ENCODE measurements at regions of chr19 and their contacts with region 1.

Region 1: DNA sequence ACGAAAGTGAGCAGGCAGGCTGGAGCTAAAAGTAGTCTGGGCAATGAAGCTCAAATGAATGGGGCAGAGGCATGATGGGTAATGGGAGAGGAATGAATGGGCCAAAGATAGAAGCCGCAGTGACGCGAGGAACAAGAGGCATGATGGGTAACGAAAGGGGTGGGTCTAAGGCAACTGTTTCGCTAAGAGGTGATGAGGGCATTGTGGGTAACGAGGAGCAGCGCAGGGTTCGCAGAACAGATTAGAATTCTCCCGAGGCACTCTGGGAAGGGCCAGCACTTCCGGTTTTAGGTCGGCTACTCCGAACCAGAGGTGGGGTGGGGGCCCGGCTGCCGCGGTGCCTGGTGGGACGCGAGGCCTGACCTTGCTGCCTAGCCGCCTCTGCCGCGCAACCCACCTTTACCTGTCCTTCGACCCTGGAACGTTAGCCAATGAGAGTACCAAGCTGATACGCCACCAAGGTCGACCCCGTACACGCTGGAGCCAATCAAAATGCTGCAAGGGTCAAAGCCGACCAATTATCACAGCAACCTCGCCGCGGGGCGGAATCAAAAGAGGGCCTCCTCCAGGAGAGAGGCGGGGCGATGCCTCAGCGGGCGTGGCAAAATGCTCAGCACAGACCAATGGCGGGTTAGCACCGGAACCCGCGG is 563 bp upstream of the TOMM40 start:
- DNase-seq: peak; percentile 100
- ATAC-seq: peak; percentile 78
- H3K4me3 ChIP-seq: peak overlapping the region; percentile 65 to 90 (median 73)
- H3K4me3 Mint-ChIP-seq: peak overlapping the region; percentile 92
- H3K27ac ChIP-seq: peak overlapping the region; percentile 87 to 98
- H3K27ac Mint-ChIP-seq: peak overlapping the region; percentile 94
- H3K4me1 ChIP-seq: peaks cover 16 to 21% of the 10 kb centered on the region in 2 donors
- H3K4me1 Mint-ChIP-seq: peaks cover 29% of the 10 kb centered on the region
- H3K27me3 ChIP-seq: no peaks in the 10 kb centered on the region
- H3K27me3 Mint-ChIP-seq: no peaks in the 10 kb centered on the region
- CTCF ChIP-seq: no peak

Region 2: DNA sequence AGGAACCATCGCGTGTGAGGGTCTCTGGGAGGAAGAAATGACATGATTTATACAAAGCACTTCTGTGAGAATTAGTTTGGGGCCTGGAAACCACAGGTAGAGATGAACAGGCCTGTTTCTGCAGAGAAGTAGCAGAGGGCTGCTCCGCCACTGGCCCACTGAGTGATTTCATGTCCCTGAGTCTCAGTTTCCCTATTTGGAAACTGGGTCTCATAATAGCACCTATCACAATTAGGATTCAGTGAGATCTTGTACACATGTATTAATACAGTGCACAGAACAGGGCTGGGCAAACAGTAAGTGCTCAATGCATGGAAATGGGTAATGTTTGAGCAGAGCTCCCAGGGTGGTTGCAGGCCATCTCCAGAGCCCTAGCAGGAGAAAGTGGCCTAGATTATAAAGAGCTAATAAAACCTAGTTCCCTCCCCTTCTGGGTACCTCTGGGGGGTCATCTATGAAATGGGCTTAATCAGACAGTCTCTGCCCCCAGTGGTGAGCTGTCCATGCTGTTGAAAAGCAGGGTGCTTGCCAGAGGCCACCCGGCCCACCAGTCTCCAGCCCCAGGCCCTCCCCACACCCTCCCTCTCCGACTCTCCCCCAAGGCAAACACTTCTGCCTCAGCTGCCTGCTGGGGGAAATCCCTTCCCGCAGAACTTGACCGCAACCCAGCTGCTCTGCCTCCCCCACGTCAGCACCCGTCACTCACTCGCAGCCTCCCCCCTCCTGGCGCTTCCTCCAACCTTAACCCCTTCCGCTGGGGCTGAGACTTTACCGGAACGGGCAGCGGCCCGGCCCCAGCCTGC is 137.5 kb before region 1 on chr19:
- CTCF ChIA-PET with region 1: no interaction called
- POLR2A ChIA-PET with region 1: interaction called, 6 read pairs
- intact Hi-C with region 1: loop called (anchors 1 kb)
- DNase-seq: peak; percentile 97
- ATAC-seq: peak; percentile 69
- H3K4me3 ChIP-seq: peak overlapping the region; percentile 44 to 94 (median 69)
- H3K4me3 Mint-ChIP-seq: peak overlapping the region; percentile 97
- H3K27ac ChIP-seq: peak overlapping the region; percentile 92
- H3K27ac Mint-ChIP-seq: peak overlapping the region; percentile 98
- H3K4me1 ChIP-seq: peaks cover 55 to 69% of the 10 kb centered on the region in 2 donors
- H3K4me1 Mint-ChIP-seq: peaks cover 59% of the 10 kb centered on the region
- H3K27me3 ChIP-seq: no peaks in the 10 kb centered on the region
- H3K27me3 Mint-ChIP-seq: no peaks in the 10 kb centered on the region
- CTCF ChIP-seq: no peak

Region 3: DNA sequence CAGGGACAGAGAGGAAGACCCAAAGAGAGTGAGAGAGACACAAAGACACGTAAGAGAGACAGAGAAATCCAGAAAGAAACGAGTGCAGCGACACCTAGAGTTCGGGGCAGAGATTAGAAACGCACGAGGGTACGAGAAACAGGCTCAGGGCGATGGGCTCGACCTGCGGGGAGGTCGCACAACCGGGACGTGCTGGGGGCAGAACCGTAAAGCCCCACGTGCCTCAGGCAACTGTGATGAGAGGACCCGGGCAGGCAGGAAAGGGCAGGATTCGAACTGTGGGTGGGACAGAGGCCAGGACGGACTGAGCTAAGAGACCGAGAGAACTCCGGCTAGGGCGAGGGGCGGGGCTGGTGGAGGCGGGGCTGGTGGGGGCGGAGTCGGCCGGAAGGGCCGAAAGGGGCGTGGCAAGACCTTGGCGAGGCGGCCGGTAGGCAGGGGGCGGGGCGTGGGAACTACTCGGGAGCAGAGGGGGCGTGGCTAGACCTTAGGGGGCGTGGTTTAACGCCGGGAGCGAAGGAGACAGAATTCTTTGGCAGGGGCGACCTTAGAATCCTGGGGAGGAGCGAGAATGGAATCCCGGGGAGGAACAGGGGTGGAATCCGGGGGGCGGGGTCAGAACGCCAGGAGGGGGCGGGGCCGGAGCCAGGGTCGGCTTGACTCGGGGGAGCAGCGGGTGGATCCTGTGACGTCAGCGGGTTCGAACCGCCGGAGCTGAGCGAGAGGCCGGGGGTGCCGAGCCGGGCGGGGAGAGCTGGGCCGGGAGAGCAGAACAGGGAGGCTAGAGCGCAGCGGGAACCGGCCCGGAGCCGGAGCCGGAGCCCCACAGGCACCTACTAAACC is 44.7 kb before region 1 on chr19 and contains the start of gene NECTIN2:
- CTCF ChIA-PET with region 1: no interaction called
- POLR2A ChIA-PET with region 1: no interaction called
- intact Hi-C with region 1: no loop called
- DNase-seq: peak; percentile 79
- ATAC-seq: peak; percentile 64
- H3K4me3 ChIP-seq: peak within 1 kb of the TSS; percentile 19 to 64 (median 47)
- H3K4me3 Mint-ChIP-seq: peak within 1 kb of the TSS; percentile 83
- H3K27ac ChIP-seq: no peak within 1 kb of the TSS
- H3K27ac Mint-ChIP-seq: peak within 1 kb of the TSS; percentile 20
- H3K4me1 ChIP-seq: peaks cover 35% of the 10 kb centered on the region in 2 donors
- H3K4me1 Mint-ChIP-seq: peaks cover 22% of the 10 kb centered on the region
- H3K27me3 ChIP-seq: peaks cover 0 to 44% (median 19%) of the 10 kb centered on the region in 4 experiments
- H3K27me3 Mint-ChIP-seq: peaks cover 38% of the 10 kb centered on the region
- CTCF ChIP-seq: no peak
- total RNA-seq, gene NECTIN2: 0.32 TPM in 1 of 2 replicates, not detected in the other

Region 4: GRCh38 chr19:44912854-44913253 is 22.4 kb after region 1 on chr19:
- CTCF ChIA-PET with region 1: interaction called, 3 read pairs
- POLR2A ChIA-PET with region 1: no interaction called
- intact Hi-C with region 1: loop called (anchors 1 kb)
- DNase-seq: no peak
- ATAC-seq: no peak
- H3K4me3 ChIP-seq: no peak overlapping the region
- H3K4me3 Mint-ChIP-seq: no peak overlapping the region
- H3K27ac ChIP-seq: no peak overlapping the region
- H3K27ac Mint-ChIP-seq: no peak overlapping the region
- H3K4me1 ChIP-seq: peaks cover 7 to 13% of the 10 kb centered on the region in 2 donors
- H3K4me1 Mint-ChIP-seq: peaks cover 9% of the 10 kb centered on the region
- H3K27me3 ChIP-seq: peaks cover 0 to 21% (median 2%) of the 10 kb centered on the region in 4 experiments
- H3K27me3 Mint-ChIP-seq: peaks cover 26% of the 10 kb centered on the region
- CTCF ChIP-seq: no peak

Region 5: DNA sequence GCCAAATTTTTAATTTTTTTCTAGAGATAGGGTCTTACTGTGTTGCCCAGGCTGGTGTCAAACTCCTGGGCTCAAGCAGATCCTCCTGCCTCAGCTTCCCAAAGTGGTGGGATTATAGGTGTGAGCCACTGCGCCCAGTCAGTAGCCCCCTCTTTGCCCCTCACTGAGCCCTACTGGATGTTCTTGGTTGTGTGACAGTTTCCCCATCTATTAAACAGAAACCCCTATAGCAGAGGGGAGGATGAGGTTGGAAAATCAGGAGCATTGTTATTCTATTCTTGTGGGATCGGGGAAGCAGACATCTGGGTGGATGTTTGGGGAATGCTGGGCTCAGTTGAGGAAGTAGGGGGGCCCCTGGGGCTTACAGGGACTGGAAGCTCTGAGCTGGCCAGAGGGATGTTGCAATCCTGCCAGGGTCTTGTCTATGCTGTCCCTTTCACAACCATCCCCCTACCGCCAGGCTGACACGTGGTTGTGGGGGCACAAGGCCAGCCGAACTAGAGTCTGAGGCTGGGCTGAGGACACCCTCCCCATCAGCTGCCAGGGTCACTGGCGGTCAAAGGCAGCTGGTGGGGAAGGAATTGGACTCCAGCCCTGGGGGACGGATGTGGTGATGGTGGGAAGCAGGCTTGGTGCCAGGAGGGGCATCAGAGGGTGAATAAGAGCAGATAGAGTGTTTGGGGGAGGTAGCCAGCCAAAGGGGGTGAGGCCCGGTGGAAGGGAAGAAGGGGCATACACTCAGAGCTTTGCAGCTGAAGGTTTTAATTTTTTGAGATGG is 34.8 kb after region 1 on chr19:
- CTCF ChIA-PET with region 1: no interaction called
- POLR2A ChIA-PET with region 1: no interaction called
- intact Hi-C with region 1: no loop called
- DNase-seq: no peak
- ATAC-seq: no peak
- H3K4me3 ChIP-seq: no peak overlapping the region
- H3K4me3 Mint-ChIP-seq: no peak overlapping the region
- H3K27ac ChIP-seq: no peak overlapping the region
- H3K27ac Mint-ChIP-seq: no peak overlapping the region
- H3K4me1 ChIP-seq: peaks cover 4 to 8% of the 10 kb centered on the region in 2 donors
- H3K4me1 Mint-ChIP-seq: peaks cover 6% of the 10 kb centered on the region
- H3K27me3 ChIP-seq: peaks cover 0 to 10% (median 5%) of the 10 kb centered on the region in 4 experiments
- H3K27me3 Mint-ChIP-seq: peaks cover 18% of the 10 kb centered on the region
- CTCF ChIP-seq: no peak

Region 6: GRCh38 chr19:44972802-44973201 is 82.3 kb after region 1 on chr19:
- CTCF ChIA-PET with region 1: no interaction called
- POLR2A ChIA-PET with region 1: no interaction called
- intact Hi-C with region 1: no loop called
- DNase-seq: no peak
- ATAC-seq: no peak
- H3K4me3 ChIP-seq: no peak overlapping the region
- H3K4me3 Mint-ChIP-seq: no peak overlapping the region
- H3K27ac ChIP-seq: no peak overlapping the region
- H3K27ac Mint-ChIP-seq: no peak overlapping the region
- H3K4me1 ChIP-seq: peaks cover 4 to 12% of the 10 kb centered on the region in 2 donors
- H3K4me1 Mint-ChIP-seq: peaks cover 6% of the 10 kb centered on the region
- H3K27me3 ChIP-seq: no peaks in the 10 kb centered on the region
- H3K27me3 Mint-ChIP-seq: no peaks in the 10 kb centered on the region
- CTCF ChIP-seq: no peak

Region 7: GRCh38 chr19:45001087-45001739 is 110.7 kb after region 1 on chr19 and contains the start of gene RELB:
- CTCF ChIA-PET with region 1: no interaction called
- POLR2A ChIA-PET with region 1: no interaction called
- intact Hi-C with region 1: loop called (anchors 1 kb)
- DNase-seq: peak; percentile 96
- ATAC-seq: peak; percentile 48
- H3K4me3 ChIP-seq: peak within 1 kb of the TSS in 4 of 5 experiments; percentile 75 to 95 (median 82)
- H3K4me3 Mint-ChIP-seq: peak within 1 kb of the TSS; percentile 96
- H3K27ac ChIP-seq: peak within 1 kb of the TSS; percentile 100
- H3K27ac Mint-ChIP-seq: peak within 1 kb of the TSS; percentile 97
- H3K4me1 ChIP-seq: peaks cover 13 to 15% of the 10 kb centered on the region in 2 donors
- H3K4me1 Mint-ChIP-seq: peaks cover 32% of the 10 kb centered on the region
- H3K27me3 ChIP-seq: no peaks in the 10 kb centered on the region
- H3K27me3 Mint-ChIP-seq: no peaks in the 10 kb centered on the region
- CTCF ChIP-seq: no peak
- total RNA-seq, gene RELB: 106 and 111 TPM in 2 replicates

Region 8: DNA sequence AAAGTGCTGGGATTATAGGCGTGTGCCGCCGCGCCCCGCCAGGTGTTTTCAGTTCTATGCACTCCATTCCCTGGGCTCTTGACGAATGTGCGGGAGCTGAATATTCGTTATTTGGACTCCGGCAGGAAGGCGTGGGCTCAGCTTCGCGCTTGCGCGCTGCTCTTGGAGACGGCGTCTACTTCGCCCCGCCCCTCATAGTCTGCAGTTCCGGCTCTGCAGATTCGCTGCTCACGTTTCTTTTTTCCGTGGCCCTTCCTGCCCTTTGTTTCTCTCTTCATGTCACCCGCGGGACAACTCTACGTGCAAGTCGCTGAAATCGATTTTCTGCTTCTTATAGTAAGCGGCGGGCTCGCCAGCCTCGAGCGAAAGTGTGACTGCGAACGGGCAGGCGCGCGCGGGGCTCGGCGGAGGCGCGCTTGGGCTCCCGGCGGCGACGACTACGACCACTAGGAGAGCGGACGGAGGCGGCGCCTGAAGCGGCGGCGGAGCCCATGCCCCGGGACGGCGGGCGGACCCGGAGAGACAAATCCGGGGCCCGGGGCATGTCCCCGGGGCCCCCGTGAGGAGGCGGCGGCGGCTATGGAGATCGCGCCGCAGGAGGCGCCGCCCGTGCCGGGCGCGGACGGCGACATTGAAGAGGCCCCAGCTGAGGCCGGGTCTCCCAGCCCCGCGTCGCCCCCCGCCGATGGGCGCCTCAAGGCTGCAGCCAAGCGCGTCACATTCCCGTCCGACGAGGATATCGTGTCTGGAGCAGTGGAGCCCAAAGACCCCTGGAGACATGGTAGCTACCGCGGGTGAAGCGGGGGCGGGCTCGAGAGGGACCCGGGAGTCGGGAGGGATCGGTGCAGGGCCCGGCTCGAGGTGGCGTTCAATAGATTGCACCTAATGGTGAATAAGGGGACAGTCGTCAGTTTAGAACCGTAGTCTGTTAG is 202.5 kb after region 1 on chr19 and contains the start of gene PPP1R37:
- CTCF ChIA-PET with region 1: interaction called, 3 read pairs
- POLR2A ChIA-PET with region 1: no interaction called
- intact Hi-C with region 1: loop called (anchors 1 kb)
- DNase-seq: peak; percentile 97
- ATAC-seq: peak; percentile 67
- H3K4me3 ChIP-seq: peak within 1 kb of the TSS; percentile 79 to 93 (median 91)
- H3K4me3 Mint-ChIP-seq: peak within 1 kb of the TSS; percentile 95
- H3K27ac ChIP-seq: peak within 1 kb of the TSS; percentile 81 to 98
- H3K27ac Mint-ChIP-seq: peak within 1 kb of the TSS; percentile 99
- H3K4me1 ChIP-seq: peaks cover 22 to 44% of the 10 kb centered on the region in 2 donors
- H3K4me1 Mint-ChIP-seq: peaks cover 62% of the 10 kb centered on the region
- H3K27me3 ChIP-seq: no peaks in the 10 kb centered on the region
- H3K27me3 Mint-ChIP-seq: no peaks in the 10 kb centered on the region
- CTCF ChIP-seq: peak; percentile 52
- total RNA-seq, gene PPP1R37: 28.1 and 37.3 TPM in 2 replicates

Region 9: DNA sequence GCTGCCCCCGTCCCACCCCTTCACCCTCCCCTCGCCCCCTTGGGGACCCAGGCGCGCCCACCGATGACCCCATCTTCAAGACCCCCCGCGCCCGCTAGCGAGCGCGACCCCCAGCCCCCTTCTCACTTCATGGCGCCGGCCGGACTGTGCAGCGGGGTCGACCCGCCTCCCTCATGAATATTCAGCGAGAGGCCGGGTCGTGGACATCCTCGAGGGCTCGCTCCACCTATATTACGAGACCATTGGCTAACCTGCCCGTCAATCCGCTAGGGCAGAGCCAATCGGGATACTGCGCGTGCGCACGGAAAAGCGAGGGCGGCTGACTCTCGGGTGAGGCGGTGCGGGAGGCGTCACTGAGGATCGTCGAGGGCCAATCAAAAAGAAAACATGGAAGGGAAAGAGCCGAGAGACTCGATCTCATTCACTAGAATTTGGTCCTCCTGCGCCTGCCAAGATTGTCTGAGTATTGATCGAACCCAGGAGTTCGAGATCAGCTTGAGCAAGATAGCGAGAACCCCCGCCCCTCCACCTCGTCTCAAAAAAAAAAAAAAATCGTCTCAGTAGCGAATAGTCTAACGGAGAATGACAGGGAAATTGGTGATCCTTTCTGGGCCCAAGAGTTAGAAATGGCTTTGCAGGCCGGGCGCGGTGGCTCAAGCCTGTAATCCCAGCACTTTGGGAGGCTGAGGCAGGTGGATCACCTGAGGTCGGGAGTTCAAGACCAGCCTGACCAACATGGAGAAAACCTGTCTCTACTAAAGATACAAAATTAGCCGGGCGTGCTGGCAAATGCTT is 480.1 kb after region 1 on chr19 and contains the start of gene ERCC2:
- CTCF ChIA-PET with region 1: no interaction called
- POLR2A ChIA-PET with region 1: no interaction called
- intact Hi-C with region 1: loop called (anchors 2 kb)
- DNase-seq: peak; percentile 99
- ATAC-seq: peak; percentile 97
- H3K4me3 ChIP-seq: peak within 1 kb of the TSS; percentile 55 to 83 (median 75)
- H3K4me3 Mint-ChIP-seq: peak within 1 kb of the TSS; percentile 94
- H3K27ac ChIP-seq: peak within 1 kb of the TSS; percentile 69 to 85
- H3K27ac Mint-ChIP-seq: peak within 1 kb of the TSS; percentile 92
- H3K4me1 ChIP-seq: peaks cover 3 to 12% of the 10 kb centered on the region in 2 donors
- H3K4me1 Mint-ChIP-seq: peaks cover 12% of the 10 kb centered on the region
- H3K27me3 ChIP-seq: no peaks in the 10 kb centered on the region
- H3K27me3 Mint-ChIP-seq: no peaks in the 10 kb centered on the region
- CTCF ChIP-seq: no peak
- total RNA-seq, gene ERCC2: 26.5 and 27.6 TPM in 2 replicates